ENCODE measurements at regions of chr2 and their contacts with region 1.

Region 1: DNA sequence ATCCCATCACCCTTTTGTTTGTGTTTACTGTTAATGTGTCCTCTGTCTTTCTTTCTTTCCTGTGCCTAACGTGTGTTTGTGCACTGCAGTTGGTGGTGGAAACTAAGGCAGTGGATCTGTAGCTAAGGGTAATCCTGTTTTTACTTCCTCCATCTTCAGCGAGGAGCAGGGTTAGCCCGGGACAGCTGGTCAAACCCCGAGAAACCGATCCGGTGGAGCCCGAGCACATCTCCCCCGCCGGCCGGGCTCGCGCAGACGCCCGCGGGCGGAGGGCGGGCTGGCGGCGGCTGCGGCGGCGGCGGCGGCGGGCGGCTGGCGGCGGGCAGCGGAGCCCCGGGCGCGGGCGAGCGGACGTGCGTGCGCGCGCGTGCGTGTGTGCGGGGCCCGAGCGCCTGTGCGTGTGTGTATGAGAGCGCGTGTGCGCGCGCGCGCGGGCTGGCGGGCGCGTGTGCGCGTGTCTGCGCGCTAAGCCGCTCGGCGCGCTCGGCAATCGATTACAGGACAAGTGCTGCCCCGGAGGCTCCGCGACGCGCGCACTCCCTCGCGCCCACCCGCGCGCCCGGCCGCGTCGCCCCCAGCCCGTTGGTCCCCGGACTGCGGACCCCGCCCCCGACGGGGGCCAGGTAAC is at the start of gene IKZF2:
- DNase-seq: peak; percentile 95
- H3K4me3 ChIP-seq: peak within 1 kb of the TSS; percentile 86
- H3K27ac ChIP-seq: peak within 1 kb of the TSS; percentile 92
- H3K4me1 ChIP-seq: peaks cover 50% of the 10 kb centered on the region
- CTCF ChIP-seq: no peak; the same call in 1 of the 2 replicates
- total RNA-seq, gene IKZF2: 45.1 and 54.6 TPM in 2 replicates

Region 2: GRCh38 chr2:212536817-212537725 is 614.5 kb before region 1 on chr2:
- CTCF ChIA-PET with region 1: no interaction called
- POLR2A ChIA-PET with region 1: no interaction called
- intact Hi-C with region 1: no loop called
- DNase-seq: no peak
- H3K4me3 ChIP-seq: no peak overlapping the region
- H3K27ac ChIP-seq: no peak overlapping the region
- H3K4me1 ChIP-seq: no peaks in the 10 kb centered on the region
- CTCF ChIP-seq: no peak

Region 3: DNA sequence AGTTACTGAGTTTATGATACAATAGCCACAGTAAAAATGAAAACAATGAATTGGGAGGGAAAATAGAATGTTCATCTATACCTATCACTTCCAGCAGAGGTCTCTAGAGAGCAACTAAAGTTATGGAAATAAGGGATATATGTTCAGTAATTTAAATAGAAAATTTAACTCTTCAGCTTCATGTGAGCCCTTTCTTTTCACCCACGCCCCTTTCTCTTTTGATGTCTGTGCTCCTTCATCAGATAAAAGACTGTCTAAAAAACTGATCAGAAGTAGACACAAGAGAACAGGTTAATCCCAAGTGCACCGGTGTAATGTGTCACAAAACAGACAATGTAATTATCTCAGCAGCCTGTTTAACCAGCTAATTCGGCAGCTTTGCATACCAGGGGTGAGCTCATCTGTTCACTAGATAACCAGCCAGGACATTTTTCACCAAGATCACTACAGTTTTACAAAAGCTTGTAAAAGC is 374.5 kb before region 1 on chr2:
- CTCF ChIA-PET with region 1: interaction called, 4 read pairs
- POLR2A ChIA-PET with region 1: interaction called, 8 read pairs
- intact Hi-C with region 1: loop called (anchors 1 kb)
- DNase-seq: peak; percentile 50
- H3K4me3 ChIP-seq: no peak overlapping the region
- H3K27ac ChIP-seq: no peak overlapping the region
- H3K4me1 ChIP-seq: peaks cover 4% of the 10 kb centered on the region
- CTCF ChIP-seq: peak; percentile 86

Region 4: GRCh38 chr2:213036836-213037235 is 114.7 kb before region 1 on chr2:
- CTCF ChIA-PET with region 1: interaction called, 3 read pairs
- POLR2A ChIA-PET with region 1: interaction called, 61 read pairs
- intact Hi-C with region 1: loop called (anchors 1 kb)
- DNase-seq: peak; percentile 9
- H3K4me3 ChIP-seq: peak overlapping the region; percentile 45
- H3K27ac ChIP-seq: peak overlapping the region; percentile 96
- H3K4me1 ChIP-seq: peaks cover 63% of the 10 kb centered on the region
- CTCF ChIP-seq: no peak

Region 5: DNA sequence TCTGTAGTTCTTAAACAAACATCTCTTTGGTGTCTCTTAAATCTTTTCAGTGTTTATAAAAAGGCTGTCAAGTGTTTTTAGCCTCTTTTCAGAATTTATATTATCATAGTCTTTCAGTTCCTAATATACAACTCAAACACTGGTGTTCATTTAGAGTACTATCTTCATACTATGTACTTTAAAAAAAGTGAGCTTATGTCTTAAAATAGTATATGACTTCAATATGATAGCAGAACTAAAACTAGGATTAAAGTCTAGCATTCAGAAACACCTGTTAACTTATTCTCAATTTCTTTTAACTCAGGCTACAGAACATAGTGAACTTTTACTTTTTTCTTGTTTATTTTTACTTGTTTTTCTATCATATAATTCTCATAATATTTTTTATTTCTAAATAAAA is 14.6 kb after region 1 on chr2:
- CTCF ChIA-PET with region 1: no interaction called
- POLR2A ChIA-PET with region 1: interaction called, 108 read pairs
- intact Hi-C with region 1: loop called (anchors 1 kb)
- DNase-seq: peak; percentile 86
- H3K4me3 ChIP-seq: no peak overlapping the region
- H3K27ac ChIP-seq: peak overlapping the region; percentile 94
- H3K4me1 ChIP-seq: peaks cover 45% of the 10 kb centered on the region
- CTCF ChIP-seq: no peak

Region 6: GRCh38 chr2:213238753-213239495 is 87.4 kb after region 1 on chr2:
- CTCF ChIA-PET with region 1: interaction called, 3 read pairs
- POLR2A ChIA-PET with region 1: interaction called, 10 read pairs
- intact Hi-C with region 1: no loop called
- DNase-seq: no peak
- H3K4me3 ChIP-seq: no peak overlapping the region
- H3K27ac ChIP-seq: peak overlapping the region; percentile 32
- H3K4me1 ChIP-seq: peaks cover 94% of the 10 kb centered on the region
- CTCF ChIP-seq: no peak

Region 7: DNA sequence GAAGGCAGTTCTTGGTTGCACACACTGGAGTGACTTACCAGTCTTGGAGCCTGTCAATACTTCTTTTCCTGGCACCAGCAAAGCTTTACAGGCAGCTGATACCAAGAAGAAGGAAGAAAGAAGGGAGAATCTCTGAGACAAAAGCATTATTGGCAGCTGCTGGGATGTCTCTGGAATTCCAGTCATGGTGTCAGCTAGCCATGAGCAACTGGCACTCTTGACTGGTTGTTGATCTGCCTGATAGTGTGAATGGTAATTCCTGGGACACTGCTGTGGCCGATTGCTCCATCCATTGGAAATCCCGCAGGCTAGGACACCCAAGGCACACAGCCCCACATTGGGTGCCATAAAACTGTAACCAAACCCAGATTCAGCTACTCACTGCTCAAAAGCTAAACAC is 114.9 kb after region 1 on chr2:
- CTCF ChIA-PET with region 1: no interaction called
- POLR2A ChIA-PET with region 1: no interaction called
- intact Hi-C with region 1: no loop called
- DNase-seq: no peak
- H3K4me3 ChIP-seq: no peak overlapping the region
- H3K27ac ChIP-seq: no peak overlapping the region
- H3K4me1 ChIP-seq: no peaks in the 10 kb centered on the region
- CTCF ChIP-seq: no peak

Measured in OCI-LY7 (cell line).